K562 (cell line): ENCODE measurements at regions of chr13 and their contacts with region 1.

Region 1: GRCh38 chr13:46721054-46721453 is 75.9 kb downstream of the ESD start:
- DNase-seq: peak in 3 of 4 experiments; percentile 11 to 50 (median 13)
- ATAC-seq: no peak
- H3K4me3 ChIP-seq: no peak overlapping the region
- H3K27ac ChIP-seq: no peak overlapping the region
- H3K4me1 ChIP-seq: no peaks in the 10 kb centered on the region
- H3K27me3 ChIP-seq: no peaks in the 10 kb centered on the region
- CTCF ChIP-seq: peak; percentile 42 to 68 (median 52); a peak in 4 of 6 replicates
- EP300 ChIP-seq: no peak
- POLR2A ChIP-seq: no peak
- RAD21 ChIP-seq: peak; percentile 69 to 71

Region 2: DNA sequence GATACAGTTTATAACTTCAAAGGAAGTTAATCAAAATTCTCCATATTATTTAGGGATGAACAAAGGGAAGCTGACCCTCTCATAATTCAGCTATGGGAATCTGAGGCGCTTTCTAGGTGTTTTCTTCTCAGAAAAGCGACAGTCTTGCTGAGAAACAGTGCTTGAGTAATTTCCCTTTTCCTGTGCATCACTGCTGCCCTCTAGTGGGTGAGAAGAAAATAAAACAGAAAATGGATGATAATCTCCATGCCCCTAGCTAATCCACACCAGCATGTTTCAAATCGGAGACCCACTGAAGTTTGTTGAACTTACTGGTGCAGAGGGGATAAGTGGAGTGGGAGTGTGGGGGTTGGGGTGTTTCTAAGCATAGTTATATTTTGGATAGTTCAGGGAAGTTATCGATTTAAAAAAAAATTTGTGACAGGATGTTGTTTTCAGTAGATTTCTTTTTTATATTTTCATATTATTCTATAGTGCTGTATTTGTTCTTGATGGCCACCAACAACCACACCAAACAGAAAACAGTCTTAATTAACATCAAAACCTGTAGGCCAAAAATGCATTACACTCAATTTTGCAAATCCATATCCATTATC is 560.5 kb before region 1 on chr13:
- CTCF ChIA-PET with region 1: no interaction called
- POLR2A ChIA-PET with region 1: no interaction called
- in situ Hi-C with region 1: no loop called
- intact Hi-C with region 1: no loop called
- DNase-seq: peak; percentile 24 to 74 (median 44)
- ATAC-seq: peak; percentile 81
- H3K4me3 ChIP-seq: no peak overlapping the region
- H3K27ac ChIP-seq: no peak overlapping the region
- H3K4me1 ChIP-seq: peaks cover 0 to 5% of the 10 kb centered on the region in 2 experiments; a peak in 2 of 5 replicates
- H3K27me3 ChIP-seq: no peaks in the 10 kb centered on the region
- CTCF ChIP-seq: peak; percentile 57 to 68 (median 67)
- EP300 ChIP-seq: no peak
- POLR2A ChIP-seq: no peak
- RAD21 ChIP-seq: peak; percentile 43 to 56

Region 3: GRCh38 chr13:46492946-46493345 is 228.1 kb before region 1 on chr13:
- CTCF ChIA-PET with region 1: interaction called, 33 read pairs
- POLR2A ChIA-PET with region 1: no interaction called
- in situ Hi-C with region 1: loop called (anchors 10 kb)
- intact Hi-C with region 1: loop called (anchors 2 kb)
- DNase-seq: peak; percentile 13 to 41 (median 16)
- ATAC-seq: no peak
- H3K4me3 ChIP-seq: no peak overlapping the region
- H3K27ac ChIP-seq: no peak overlapping the region
- H3K4me1 ChIP-seq: no peaks in the 10 kb centered on the region
- H3K27me3 ChIP-seq: peaks cover 0 to 9% of the 10 kb centered on the region in 2 experiments; a peak in 1 of 5 replicates
- CTCF ChIP-seq: peak; percentile 19 to 62 (median 40); a peak in 3 of 6 replicates
- EP300 ChIP-seq: no peak
- POLR2A ChIP-seq: no peak
- RAD21 ChIP-seq: peak; percentile 69 to 72

Region 4: DNA sequence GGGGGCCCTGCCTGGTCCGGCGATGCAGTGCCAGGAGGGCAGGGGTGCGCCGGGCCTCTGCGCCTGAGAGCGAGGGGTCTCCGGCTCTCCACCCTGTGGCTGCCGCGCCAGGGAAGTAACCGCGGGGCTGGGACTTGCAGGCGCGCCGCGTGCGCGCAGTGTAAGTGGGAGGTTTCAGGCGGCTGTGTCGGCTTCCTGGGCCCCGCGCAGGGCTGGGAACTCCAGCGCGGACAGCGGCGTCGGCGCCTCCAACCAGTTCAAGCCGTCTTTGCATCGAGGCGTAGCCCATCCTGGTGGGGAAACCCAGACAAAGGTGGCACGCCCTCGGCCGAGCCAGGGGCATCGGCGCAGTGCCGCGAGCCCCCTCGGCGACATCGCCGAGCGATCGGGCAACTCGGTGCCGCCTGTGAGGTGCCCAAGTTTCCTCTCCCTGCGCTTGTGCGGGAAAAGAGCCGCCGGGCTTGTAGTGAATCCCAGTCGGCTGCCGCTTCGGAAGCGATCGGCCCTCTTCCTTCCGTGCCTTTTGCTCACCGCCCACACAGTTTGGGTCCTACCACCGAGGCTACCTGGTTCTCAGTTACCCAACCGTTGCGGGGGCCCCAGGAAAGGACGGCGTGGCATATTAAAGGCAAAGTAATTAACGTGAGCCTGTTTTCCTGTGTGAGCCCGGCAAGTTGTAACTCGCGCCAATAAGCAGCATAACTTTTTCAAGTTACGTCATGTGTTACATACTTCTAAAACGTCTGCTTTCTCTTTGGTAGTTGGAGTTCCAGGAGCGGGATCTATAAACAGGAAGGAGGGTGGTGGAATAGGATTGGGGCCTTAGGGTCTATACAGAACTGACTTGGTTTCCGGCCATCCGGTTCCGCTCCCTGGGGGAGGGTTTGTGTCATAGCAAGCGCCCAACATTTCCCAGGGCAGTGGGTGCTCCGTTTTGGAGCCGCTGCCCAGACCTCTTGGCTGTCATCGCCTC is 166.9 kb before region 1 on chr13:
- CTCF ChIA-PET with region 1: interaction called, 18 read pairs
- POLR2A ChIA-PET with region 1: no interaction called
- in situ Hi-C with region 1: no loop called
- intact Hi-C with region 1: loop called (anchors 1 kb)
- DNase-seq: peak; percentile 50 to 79 (median 58)
- ATAC-seq: peak; percentile 78
- H3K4me3 ChIP-seq: peak overlapping the region; percentile 77
- H3K27ac ChIP-seq: peak overlapping the region; percentile 78
- H3K4me1 ChIP-seq: peaks cover 9 to 17% of the 10 kb centered on the region in 2 experiments; a peak in 4 of 5 replicates
- H3K27me3 ChIP-seq: no peaks in the 10 kb centered on the region
- CTCF ChIP-seq: peak in 2 of 3 experiments; percentile 9 to 30; a peak in 2 of 6 replicates
- EP300 ChIP-seq: 0 out of 2 replicates have a peak, but pooled peaks have one; percentile 4
- POLR2A ChIP-seq: peak; percentile 54
- RAD21 ChIP-seq: no peak

Region 5: GRCh38 chr13:46603165-46603603 is 117.9 kb before region 1 on chr13:
- CTCF ChIA-PET with region 1: interaction called, 3 read pairs
- POLR2A ChIA-PET with region 1: no interaction called
- in situ Hi-C with region 1: no loop called
- intact Hi-C with region 1: loop called (anchors 10 kb)
- DNase-seq: peak in 2 of 4 experiments; percentile 12 to 18
- ATAC-seq: peak; percentile 81
- H3K4me3 ChIP-seq: no peak overlapping the region
- H3K27ac ChIP-seq: no peak overlapping the region
- H3K4me1 ChIP-seq: peaks cover 5 to 18% of the 10 kb centered on the region in 2 experiments; a peak in 3 of 5 replicates
- H3K27me3 ChIP-seq: no peaks in the 10 kb centered on the region
- CTCF ChIP-seq: peak in 2 of 3 experiments; percentile 45 to 49; a peak in 3 of 6 replicates
- EP300 ChIP-seq: no peak
- POLR2A ChIP-seq: no peak
- RAD21 ChIP-seq: peak in 1 of 2 experiments; percentile 33; a peak in 2 of 4 replicates

Region 6: DNA sequence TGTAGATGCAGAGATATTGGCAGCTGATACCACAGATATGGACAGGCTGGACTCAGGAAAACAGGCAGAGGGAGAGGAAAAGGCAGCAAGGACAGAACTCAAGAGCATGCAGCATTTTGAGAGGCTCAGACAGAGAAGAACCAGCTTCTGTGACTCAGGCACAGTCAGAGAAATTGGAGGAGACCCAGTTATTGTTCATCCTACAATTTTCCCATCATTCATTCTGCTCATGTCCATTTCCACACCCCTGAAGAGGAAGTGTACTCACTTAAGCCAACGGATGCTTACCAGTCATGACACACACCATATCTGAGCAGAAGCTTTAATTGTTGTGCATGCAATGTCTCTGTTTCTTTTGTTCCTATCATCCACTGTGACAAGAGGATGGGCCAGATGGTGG is 535.6 kb after region 1 on chr13:
- CTCF ChIA-PET with region 1: no interaction called
- POLR2A ChIA-PET with region 1: no interaction called
- in situ Hi-C with region 1: no loop called
- intact Hi-C with region 1: no loop called
- DNase-seq: no peak
- ATAC-seq: no peak
- H3K4me3 ChIP-seq: no peak overlapping the region
- H3K27ac ChIP-seq: no peak overlapping the region
- H3K4me1 ChIP-seq: no peaks in the 10 kb centered on the region
- H3K27me3 ChIP-seq: no peaks in the 10 kb centered on the region
- CTCF ChIP-seq: no peak
- EP300 ChIP-seq: no peak
- POLR2A ChIP-seq: no peak
- RAD21 ChIP-seq: no peak